Activated B cell treated with CpG ODN at 0.5 μM for 24 hours (primary cell): ENCODE measurements at regions of chr21 and their contacts with region 1.

Region 1: GRCh38 chr21:24895885-24896734 is 711.2 kb downstream of the MRPL39 start:
- DNase-seq: no peak
- ATAC-seq: peak; percentile 69
- H3K4me3 Mint-ChIP-seq: no peak overlapping the region
- H3K27ac Mint-ChIP-seq: peak overlapping the region; percentile 4
- H3K4me1 Mint-ChIP-seq: peaks cover 21% of the 10 kb centered on the region
- H3K27me3 Mint-ChIP-seq: no peaks in the 10 kb centered on the region
- CTCF ChIP-seq: no peak

Region 2: DNA sequence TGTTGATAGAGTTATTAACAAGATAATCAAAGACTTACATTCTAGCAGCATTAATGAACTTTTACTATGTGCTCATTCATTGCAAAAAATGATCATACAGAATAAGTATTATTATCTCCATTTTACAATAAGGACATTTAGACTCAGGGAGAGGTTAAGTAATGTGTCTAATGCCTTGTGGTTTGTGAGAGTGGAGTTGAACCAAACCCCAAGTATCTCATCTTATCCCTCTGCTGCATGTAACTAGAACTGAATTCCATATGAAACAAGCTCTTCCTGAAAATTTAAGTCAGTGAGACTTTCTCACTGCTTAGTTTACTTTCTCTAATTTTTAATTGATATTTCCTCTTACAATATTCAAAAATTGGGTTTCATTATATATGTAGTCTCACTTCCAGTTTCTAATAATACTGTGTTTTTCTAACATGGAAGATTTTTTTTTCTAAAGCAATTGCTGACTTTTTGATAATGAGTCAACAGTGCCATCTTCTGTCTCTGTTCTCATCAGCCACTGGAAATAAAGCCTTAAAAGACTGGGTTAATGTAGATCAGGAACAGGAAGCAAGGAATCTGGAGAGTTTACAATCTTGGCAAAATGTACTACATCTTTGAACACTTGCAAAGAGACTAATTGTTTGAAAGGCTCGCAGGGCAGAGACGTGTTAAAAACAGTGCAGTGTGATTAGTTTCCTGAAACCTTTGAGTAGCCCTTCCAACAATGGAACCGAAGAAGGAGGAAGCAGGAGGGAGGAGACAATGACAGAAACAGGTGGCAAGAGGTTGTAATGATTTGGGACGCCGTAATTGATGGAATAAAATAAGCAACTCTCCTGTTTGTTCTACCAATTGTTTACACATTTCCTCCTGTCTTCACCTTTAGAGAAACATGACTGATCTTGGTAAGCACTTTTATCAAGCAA is 143.6 kb after region 1 on chr21:
- CTCF ChIA-PET with region 1: interaction called, 6 read pairs
- POLR2A ChIA-PET with region 1: no interaction called
- intact Hi-C with region 1: loop called (anchors 1 kb)
- DNase-seq: no peak
- ATAC-seq: peak; percentile 64
- H3K4me3 Mint-ChIP-seq: peak overlapping the region; percentile 74
- H3K27ac Mint-ChIP-seq: peak overlapping the region; percentile 80
- H3K4me1 Mint-ChIP-seq: peaks cover 35% of the 10 kb centered on the region
- H3K27me3 Mint-ChIP-seq: no peaks in the 10 kb centered on the region
- CTCF ChIP-seq: no peak

Region 3: DNA sequence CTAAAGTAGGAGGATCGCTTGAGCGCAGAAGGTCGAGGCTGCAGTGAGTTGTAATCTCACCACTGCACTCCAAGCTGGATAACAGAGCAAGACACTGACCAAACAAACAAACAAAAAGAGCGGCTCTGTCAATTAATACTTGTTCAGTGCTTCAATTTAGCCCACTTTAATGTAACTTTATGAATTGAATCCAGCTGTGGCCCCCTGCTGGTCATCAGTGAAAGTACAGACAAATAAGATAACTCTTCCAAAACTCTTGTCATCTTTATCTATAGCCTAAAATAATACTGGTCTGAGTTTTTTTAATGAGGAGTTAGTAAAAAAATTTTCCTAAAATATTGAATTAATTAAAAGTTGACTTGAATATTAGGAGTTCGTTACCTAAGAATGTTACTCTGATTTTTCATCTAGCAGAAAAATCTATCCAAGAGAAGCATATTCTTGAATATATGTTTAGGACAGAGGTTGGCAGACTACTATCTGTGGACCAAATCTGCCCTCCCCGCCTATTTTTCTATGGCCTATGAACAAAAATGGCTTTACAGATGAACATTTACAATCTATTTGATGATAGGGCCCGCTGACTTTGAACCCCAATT is 812.5 kb after region 1 on chr21:
- CTCF ChIA-PET with region 1: no interaction called
- POLR2A ChIA-PET with region 1: no interaction called
- intact Hi-C with region 1: loop called (anchors 2 kb)
- DNase-seq: no peak
- ATAC-seq: peak; percentile 34
- H3K4me3 Mint-ChIP-seq: no peak overlapping the region
- H3K27ac Mint-ChIP-seq: no peak overlapping the region
- H3K4me1 Mint-ChIP-seq: no peaks in the 10 kb centered on the region
- H3K27me3 Mint-ChIP-seq: no peaks in the 10 kb centered on the region
- CTCF ChIP-seq: peak; percentile 94